ENCODE measurements at regions of chr1 and their contacts with region 1.

Region 1: GRCh38 chr1:95116580-95117206 is 462 bp upstream of the TLCD4 start:
- DNase-seq: peak; percentile 60
- H3K4me3 ChIP-seq: peak overlapping the region; percentile 73 to 79
- H3K27ac ChIP-seq: peak overlapping the region; percentile 78 to 80
- H3K4me1 ChIP-seq: no peaks in the 10 kb centered on the region
- H3K27me3 ChIP-seq: no peaks in the 10 kb centered on the region
- CTCF ChIP-seq: peak; percentile 25 to 64 (median 50)
- POLR2A ChIP-seq: no peak

Region 2: DNA sequence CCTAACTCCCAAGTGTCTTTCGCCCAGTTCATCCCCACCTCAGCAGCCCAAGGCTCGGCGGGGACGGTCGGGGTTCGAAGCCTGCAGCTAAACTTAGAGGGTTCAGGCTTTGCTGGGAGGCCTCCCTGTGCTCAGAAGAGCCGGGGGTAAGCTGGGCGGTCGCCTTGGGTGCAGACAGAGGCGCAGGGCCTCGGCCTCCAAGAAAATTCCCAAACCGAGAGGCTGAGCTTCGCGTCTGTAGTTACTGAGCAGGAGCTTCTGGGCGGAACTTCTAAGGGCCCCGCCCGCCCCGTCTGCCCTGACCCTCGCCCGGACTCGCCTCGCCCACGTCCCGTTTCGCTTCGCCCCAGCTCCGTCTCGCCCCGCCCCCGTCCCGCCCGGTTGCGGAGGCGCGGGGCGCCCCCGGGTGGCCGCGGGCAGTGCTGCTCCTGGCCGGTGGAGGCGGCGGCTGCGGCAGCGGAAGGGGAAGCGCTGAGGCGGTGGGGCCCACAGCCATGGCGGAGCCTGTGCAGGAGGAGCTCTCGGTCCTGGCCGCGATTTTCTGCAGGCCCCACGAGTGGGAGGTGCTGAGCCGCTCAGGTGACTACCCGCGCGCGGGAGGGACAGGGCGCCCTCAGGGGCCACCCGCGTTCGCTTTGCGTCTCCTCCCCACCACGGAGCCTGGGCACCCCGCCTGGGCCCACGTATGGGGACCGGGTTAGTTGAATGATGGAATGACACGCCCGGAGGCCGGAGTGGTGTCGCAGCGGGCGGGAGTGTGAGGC is 117.2 kb after region 1 on chr1 and contains the start of gene RWDD3:
- intact Hi-C with region 1: loop called (anchors 2 kb)
- DNase-seq: peak; percentile 94
- H3K4me3 ChIP-seq: peak within 1 kb of the TSS; percentile 73 to 85
- H3K27ac ChIP-seq: peak within 1 kb of the TSS; percentile 84 to 85
- H3K4me1 ChIP-seq: peaks cover 3% of the 10 kb centered on the region
- H3K27me3 ChIP-seq: no peaks in the 10 kb centered on the region
- CTCF ChIP-seq: peak; percentile 64 to 95 (median 94)
- POLR2A ChIP-seq: peak; percentile 60
- total RNA-seq, gene RWDD3: 12.8 to 14.4 TPM

Measured in prostate gland (tissue), 2 donors.